ENCODE measurements at regions of chr7 and their contacts with region 1.

Region 1: GRCh38 chr7:39005036-39005435 is 27.3 kb downstream of the POU6F2 start:
- DNase-seq: no peak
- ATAC-seq: no peak
- H3K4me3 ChIP-seq: no peak overlapping the region
- H3K27ac ChIP-seq: no peak overlapping the region
- H3K4me1 ChIP-seq: no peaks in the 10 kb centered on the region
- H3K27me3 ChIP-seq: peaks cover 0 to 11% (median 0%) of the 10 kb centered on the region in 7 donors
- CTCF ChIP-seq: no peak

Region 2: GRCh38 chr7:38975944-38976392 is 29.1 kb before region 1 on chr7:
- intact Hi-C with region 1: loop called in 1 of 10 experiments (anchors 1 kb)
- DNase-seq: no peak
- ATAC-seq: no peak
- H3K4me3 ChIP-seq: peak overlapping the region in 5 of 10 donors; percentile 5 to 30 (median 23)
- H3K27ac ChIP-seq: no peak overlapping the region
- H3K4me1 ChIP-seq: peaks cover 0 to 5% (median 0%) of the 10 kb centered on the region in 9 donors
- H3K27me3 ChIP-seq: peaks cover 0 to 76% (median 53%) of the 10 kb centered on the region in 7 donors
- CTCF ChIP-seq: no peak

Measured in heart right ventricle (tissue), 16 donors.